HepG2 (cell line): ENCODE measurements at regions of chr3 and their contacts with region 1.

Region 1: GRCh38 chr3:10758304-10759061 is 57.5 kb upstream of the SLC6A11 start:
- DNase-seq: peak; percentile 60
- ATAC-seq: peak; percentile 96
- H3K4me3 ChIP-seq: no peak overlapping the region
- H3K27ac ChIP-seq: no peak overlapping the region
- H3K4me1 ChIP-seq: peaks cover 10% of the 10 kb centered on the region; the same call in 1 of the 2 replicates
- H3K27me3 ChIP-seq: peaks cover 0 to 16% of the 10 kb centered on the region in 2 experiments; a peak in 1 of 5 replicates
- CTCF ChIP-seq: peak; percentile 98
- EP300 ChIP-seq: no peak
- POLR2A ChIP-seq: no peak
- RAD21 ChIP-seq: peak; percentile 96

Region 2: GRCh38 chr3:10725067-10725466 is 33.4 kb before region 1 on chr3:
- CTCF ChIA-PET with region 1: no interaction called
- POLR2A ChIA-PET with region 1: no interaction called
- in situ Hi-C with region 1: no loop called
- intact Hi-C with region 1: no loop called
- DNase-seq: no peak
- ATAC-seq: no peak
- H3K4me3 ChIP-seq: no peak overlapping the region
- H3K27ac ChIP-seq: no peak overlapping the region
- H3K4me1 ChIP-seq: no peaks in the 10 kb centered on the region
- H3K27me3 ChIP-seq: peaks cover 0 to 12% of the 10 kb centered on the region in 2 experiments; a peak in 1 of 5 replicates
- CTCF ChIP-seq: no peak
- EP300 ChIP-seq: no peak
- POLR2A ChIP-seq: no peak
- RAD21 ChIP-seq: no peak

Region 3: GRCh38 chr3:10883478-10884234 is 125.2 kb after region 1 on chr3:
- CTCF ChIA-PET with region 1: interaction called, 45 read pairs
- POLR2A ChIA-PET with region 1: no interaction called
- in situ Hi-C with region 1: loop called (anchors 5 kb)
- intact Hi-C with region 1: loop called (anchors 1 kb)
- DNase-seq: peak; percentile 33
- ATAC-seq: peak; percentile 61; the same call in 2 of the 3 replicates
- H3K4me3 ChIP-seq: no peak overlapping the region
- H3K27ac ChIP-seq: no peak overlapping the region
- H3K4me1 ChIP-seq: no peaks in the 10 kb centered on the region
- H3K27me3 ChIP-seq: no peaks in the 10 kb centered on the region; a peak in 1 of 5 replicates
- CTCF ChIP-seq: peak; percentile 85
- EP300 ChIP-seq: no peak
- POLR2A ChIP-seq: no peak
- RAD21 ChIP-seq: peak; percentile 65

Region 4: GRCh38 chr3:10945683-10946287 is 187.3 kb after region 1 on chr3:
- CTCF ChIA-PET with region 1: interaction called, 3 read pairs
- POLR2A ChIA-PET with region 1: no interaction called
- in situ Hi-C with region 1: no loop called
- intact Hi-C with region 1: loop called (anchors 10 kb)
- DNase-seq: peak; percentile 47
- ATAC-seq: peak; percentile 95
- H3K4me3 ChIP-seq: no peak overlapping the region
- H3K27ac ChIP-seq: no peak overlapping the region
- H3K4me1 ChIP-seq: no peaks in the 10 kb centered on the region
- H3K27me3 ChIP-seq: peaks cover 4 to 18% of the 10 kb centered on the region in 2 experiments; a peak in 3 of 5 replicates
- CTCF ChIP-seq: peak; percentile 93
- EP300 ChIP-seq: no peak
- POLR2A ChIP-seq: no peak
- RAD21 ChIP-seq: peak; percentile 74

Region 5: DNA sequence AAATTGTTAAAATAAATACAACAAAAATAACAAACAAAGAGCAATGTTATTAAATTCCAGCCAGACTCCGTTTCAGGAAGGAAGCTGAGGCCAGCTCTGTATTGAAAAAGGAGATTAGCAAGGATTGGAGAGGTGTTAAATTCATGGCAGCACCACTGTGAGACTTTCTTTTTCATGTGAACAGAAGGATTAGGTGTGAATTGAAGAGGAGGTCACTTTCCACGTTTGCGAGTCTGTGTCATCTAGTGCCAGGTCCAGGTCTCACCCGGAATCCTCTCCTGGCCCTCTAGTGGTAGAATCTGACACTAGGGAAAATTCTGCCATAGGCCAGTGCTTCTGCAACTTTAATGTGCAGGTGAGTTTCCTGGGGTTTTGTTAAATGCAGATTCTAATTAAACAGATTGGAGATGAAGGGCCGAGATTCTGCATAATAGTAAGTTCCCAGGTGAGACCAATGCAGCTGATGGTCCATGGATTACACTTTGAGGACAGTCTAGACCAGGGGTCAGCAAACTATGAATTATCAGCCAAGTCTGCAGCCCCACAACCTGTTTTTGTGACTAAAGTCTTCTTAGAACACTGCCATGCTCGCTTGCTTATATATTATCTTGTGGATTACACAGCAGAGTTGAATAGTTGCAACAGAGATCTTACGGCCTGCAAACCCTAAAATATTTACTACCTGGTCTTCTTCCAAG is 224.9 kb after region 1 on chr3:
- CTCF ChIA-PET with region 1: interaction called, 11 read pairs
- POLR2A ChIA-PET with region 1: no interaction called
- in situ Hi-C with region 1: no loop called
- intact Hi-C with region 1: loop called (anchors 1 kb)
- DNase-seq: peak; percentile 25
- ATAC-seq: peak; percentile 73
- H3K4me3 ChIP-seq: no peak overlapping the region
- H3K27ac ChIP-seq: no peak overlapping the region
- H3K4me1 ChIP-seq: peaks cover 24% of the 10 kb centered on the region
- H3K27me3 ChIP-seq: 0 out of 5 replicates have a peak, but pooled peaks cover 0 to 3% of the 10 kb centered on the region in 2 experiments
- CTCF ChIP-seq: peak; percentile 73
- EP300 ChIP-seq: no peak
- POLR2A ChIP-seq: no peak
- RAD21 ChIP-seq: 0 out of 2 replicates have a peak, but pooled peaks have one; percentile 16

Region 6: GRCh38 chr3:11060500-11061251 is 302.2 kb after region 1 on chr3:
- CTCF ChIA-PET with region 1: interaction called, 9 read pairs
- POLR2A ChIA-PET with region 1: no interaction called
- in situ Hi-C with region 1: loop called (anchors 5 kb)
- intact Hi-C with region 1: loop called (anchors 2 kb)
- DNase-seq: peak; percentile 12
- ATAC-seq: peak; percentile 92
- H3K4me3 ChIP-seq: no peak overlapping the region
- H3K27ac ChIP-seq: no peak overlapping the region
- H3K4me1 ChIP-seq: no peaks in the 10 kb centered on the region
- H3K27me3 ChIP-seq: peaks cover 0 to 10% of the 10 kb centered on the region in 2 experiments; a peak in 3 of 5 replicates
- CTCF ChIP-seq: peak; percentile 87
- EP300 ChIP-seq: no peak
- POLR2A ChIP-seq: no peak
- RAD21 ChIP-seq: peak; percentile 50